ENCODE measurements at regions of chr17 and their contacts with region 1.

Region 1: DNA sequence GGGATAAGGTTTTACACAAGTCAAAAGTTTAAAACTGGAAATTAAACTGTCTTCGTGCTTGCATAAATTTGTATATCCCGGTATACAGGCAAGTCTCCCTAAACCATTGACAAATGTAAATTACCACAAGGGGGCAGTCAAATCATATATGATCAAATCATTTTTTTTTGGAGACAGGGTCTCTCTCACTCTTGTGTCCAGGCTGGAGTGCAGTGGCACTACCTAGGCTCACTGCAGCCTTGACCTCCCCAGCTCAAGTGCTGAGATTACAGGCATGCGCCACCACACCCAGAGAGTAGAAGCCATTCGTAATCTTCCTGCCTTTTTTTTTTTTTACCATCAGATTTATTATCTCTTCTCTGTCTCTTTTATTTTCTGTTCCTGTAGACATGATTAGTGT is 18.5 kb downstream of the TOP2A start:
- DNase-seq: no peak
- ATAC-seq: peak in 2 of 4 donors; percentile 44 to 70
- H3K4me3 ChIP-seq: no peak overlapping the region
- H3K27ac ChIP-seq: no peak overlapping the region
- H3K4me1 ChIP-seq: no peaks in the 10 kb centered on the region
- H3K27me3 ChIP-seq: no peaks in the 10 kb centered on the region
- CTCF ChIP-seq: peak; percentile 49 to 74 (median 58)
- POLR2A ChIP-seq: no peak

Region 2: GRCh38 chr17:40279407-40279806 is 119.8 kb before region 1 on chr17:
- intact Hi-C with region 1: no loop called
- DNase-seq: no peak
- ATAC-seq: no peak
- H3K4me3 ChIP-seq: no peak overlapping the region
- H3K27ac ChIP-seq: no peak overlapping the region
- H3K4me1 ChIP-seq: peaks cover 0 to 22% (median 5%) of the 10 kb centered on the region in 12 donors
- H3K27me3 ChIP-seq: no peaks in the 10 kb centered on the region
- CTCF ChIP-seq: no peak
- POLR2A ChIP-seq: no peak

Region 3: DNA sequence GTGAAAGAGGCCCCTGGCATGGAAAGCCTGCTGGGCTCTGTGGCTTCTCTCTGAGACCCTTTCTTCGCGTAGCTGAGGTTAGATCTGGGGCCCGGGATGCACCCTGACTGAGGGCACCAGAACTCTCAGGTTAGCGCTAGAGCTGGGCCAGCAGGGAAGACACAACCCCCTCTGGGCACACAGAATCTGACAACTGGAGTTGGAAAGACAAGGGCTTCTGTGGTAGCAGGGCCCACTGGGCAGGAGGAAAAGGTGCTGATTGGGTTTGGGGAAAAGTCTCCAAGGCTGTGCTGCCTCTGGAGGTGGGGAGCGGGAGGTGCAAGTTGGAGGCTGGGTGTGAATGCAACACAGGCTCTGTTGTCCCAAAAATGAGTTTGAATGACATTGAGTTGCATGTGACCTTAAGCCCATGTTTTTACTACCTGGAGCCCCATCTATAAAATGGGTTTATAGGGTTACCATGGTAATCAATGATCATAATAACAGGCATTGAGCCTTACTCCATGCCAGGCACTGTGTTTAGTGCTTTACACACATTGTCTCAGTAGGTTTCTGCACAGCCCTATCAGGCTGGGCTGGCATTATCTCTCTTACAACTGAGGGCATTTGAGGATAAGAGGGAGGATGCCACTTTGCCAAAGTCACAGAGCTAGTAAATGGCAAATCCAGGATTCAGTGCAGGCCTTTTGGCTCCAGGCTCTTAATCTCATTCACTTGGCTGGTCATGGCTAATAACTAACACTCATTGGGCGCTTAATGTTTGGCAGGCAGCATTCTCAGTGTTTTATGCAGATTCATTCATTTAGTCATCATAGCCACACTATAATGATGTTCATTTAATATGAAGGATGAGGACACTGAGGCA is 34.6 kb after region 1 on chr17:
- intact Hi-C with region 1: loop called in 1 of 10 experiments (anchors 2 kb)
- DNase-seq: no peak
- ATAC-seq: peak in 3 of 4 donors; percentile 38 to 40 (median 39)
- H3K4me3 ChIP-seq: no peak overlapping the region
- H3K27ac ChIP-seq: peak overlapping the region in 8 of 12 donors; percentile 4 to 84 (median 38)
- H3K4me1 ChIP-seq: peaks cover 0 to 29% (median 15%) of the 10 kb centered on the region in 12 donors
- H3K27me3 ChIP-seq: no peaks in the 10 kb centered on the region
- CTCF ChIP-seq: peak in 11 of 12 donors; percentile 24 to 60 (median 39)
- POLR2A ChIP-seq: no peak

Region 4: GRCh38 chr17:40443583-40444327 is 44.6 kb after region 1 on chr17:
- intact Hi-C with region 1: loop called in 1 of 10 experiments (anchors 5 kb)
- DNase-seq: peak; percentile 80 to 92 (median 83)
- ATAC-seq: peak in 3 of 4 donors; percentile 48 to 58 (median 50)
- H3K4me3 ChIP-seq: peak overlapping the region; percentile 46 to 92 (median 74)
- H3K27ac ChIP-seq: peak overlapping the region; percentile 86 to 98 (median 96)
- H3K4me1 ChIP-seq: peaks cover 0 to 57% (median 39%) of the 10 kb centered on the region in 12 donors
- H3K27me3 ChIP-seq: no peaks in the 10 kb centered on the region
- CTCF ChIP-seq: peak in 10 of 12 donors; percentile 12 to 56 (median 40)
- POLR2A ChIP-seq: no peak

Region 5: DNA sequence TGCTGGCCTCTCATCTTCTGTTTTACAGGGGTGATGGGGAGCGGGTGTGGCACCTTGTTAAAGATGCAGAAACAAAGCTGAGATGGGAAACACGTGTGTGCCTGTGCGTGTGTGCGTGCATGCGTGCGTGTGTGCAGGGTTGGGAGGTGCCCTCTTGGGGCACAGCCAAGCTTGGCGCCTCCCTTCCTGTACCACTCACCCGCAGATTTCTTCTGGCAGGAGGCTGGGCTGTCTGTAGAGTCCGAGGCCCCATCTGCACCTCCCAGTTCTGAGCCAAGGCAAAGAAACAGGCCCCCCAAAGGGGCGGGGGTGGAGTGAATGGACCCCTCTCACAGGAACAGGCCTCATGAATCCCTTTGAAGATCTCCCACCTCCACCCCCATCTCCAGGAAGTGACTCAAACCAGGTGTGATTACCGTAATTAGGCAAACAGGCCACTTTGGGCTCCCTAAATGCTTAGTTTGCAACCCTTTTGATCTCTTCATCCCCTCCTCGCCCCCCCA is 81.4 kb after region 1 on chr17:
- intact Hi-C with region 1: loop called in 4 of 10 experiments (anchors 2 to 5 kb)
- DNase-seq: peak in 1 of 5 donors; percentile 51
- ATAC-seq: peak in 3 of 4 donors; percentile 20 to 60 (median 30)
- H3K4me3 ChIP-seq: no peak overlapping the region
- H3K27ac ChIP-seq: peak overlapping the region in 1 of 12 donors; percentile 86
- H3K4me1 ChIP-seq: peaks cover 0 to 31% (median 5%) of the 10 kb centered on the region in 12 donors
- H3K27me3 ChIP-seq: no peaks in the 10 kb centered on the region
- CTCF ChIP-seq: no peak
- POLR2A ChIP-seq: no peak

Region 6: GRCh38 chr17:40510328-40510648 is 111.1 kb after region 1 on chr17:
- intact Hi-C with region 1: no loop called
- DNase-seq: peak in 1 of 5 donors; percentile 28
- ATAC-seq: peak in 3 of 4 donors; percentile 23 to 52 (median 28)
- H3K4me3 ChIP-seq: no peak overlapping the region
- H3K27ac ChIP-seq: no peak overlapping the region
- H3K4me1 ChIP-seq: peaks cover 0 to 10% (median 1%) of the 10 kb centered on the region in 12 donors
- H3K27me3 ChIP-seq: peaks cover 0 to 5% (median 0%) of the 10 kb centered on the region in 9 donors
- CTCF ChIP-seq: no peak
- POLR2A ChIP-seq: no peak

Region 7: GRCh38 chr17:40531051-40531991 is 132.1 kb after region 1 on chr17:
- intact Hi-C with region 1: loop called in 9 of 10 experiments (anchors 1 to 5 kb)
- DNase-seq: peak in 1 of 5 donors; percentile 19
- ATAC-seq: no peak
- H3K4me3 ChIP-seq: no peak overlapping the region
- H3K27ac ChIP-seq: peak overlapping the region in 6 of 12 donors; percentile 22 to 84 (median 75)
- H3K4me1 ChIP-seq: peaks cover 0 to 48% (median 26%) of the 10 kb centered on the region in 12 donors
- H3K27me3 ChIP-seq: no peaks in the 10 kb centered on the region
- CTCF ChIP-seq: no peak
- POLR2A ChIP-seq: no peak

Region 8: DNA sequence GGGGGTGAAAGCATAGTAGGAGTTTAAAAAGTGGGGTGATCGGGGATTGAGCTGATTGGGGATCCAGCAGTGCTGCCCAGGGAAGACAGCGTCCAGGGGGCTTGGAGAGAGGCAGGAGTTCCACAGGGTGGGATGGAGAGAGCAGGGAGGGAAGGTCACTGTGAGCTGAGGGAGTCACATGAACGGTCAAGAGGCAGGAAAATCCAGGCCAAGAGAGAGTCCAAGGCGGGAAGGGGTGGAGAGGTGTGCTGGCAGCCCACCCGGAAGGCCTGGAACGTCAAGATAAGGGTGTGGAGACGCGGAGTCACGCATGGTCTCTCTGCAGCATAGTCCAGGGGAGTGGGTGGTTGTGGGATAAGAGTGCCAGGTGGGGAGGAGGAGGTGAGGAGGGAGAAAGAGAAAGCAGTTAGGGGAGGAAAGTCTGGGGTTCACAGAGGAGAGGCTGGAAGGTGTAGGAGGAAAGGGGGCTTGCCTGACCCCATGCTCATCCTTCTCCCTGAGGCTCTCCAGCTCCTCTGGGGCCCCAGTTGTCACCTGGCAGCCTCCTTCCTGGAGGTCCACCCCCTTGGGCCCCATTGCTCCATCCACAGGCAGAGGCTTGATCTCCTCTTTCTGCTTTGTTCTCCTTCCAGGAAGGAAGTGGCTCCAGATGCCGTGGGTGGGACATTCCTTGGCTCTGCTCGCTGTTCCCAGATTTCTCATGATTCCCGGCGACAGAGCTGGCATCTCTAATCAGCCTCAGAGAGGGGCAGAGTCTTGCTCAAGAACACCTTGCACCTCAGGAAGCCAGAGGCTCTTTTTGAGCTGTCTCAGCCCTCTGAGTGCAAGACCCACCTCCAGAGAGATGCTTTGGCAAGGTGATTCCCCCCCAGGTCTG is 137.3 kb after region 1 on chr17:
- intact Hi-C with region 1: loop called in 9 of 10 experiments (anchors 1 to 5 kb)
- DNase-seq: peak in 4 of 5 donors; percentile 71 to 80 (median 76)
- ATAC-seq: peak; percentile 45 to 75 (median 64)
- H3K4me3 ChIP-seq: no peak overlapping the region
- H3K27ac ChIP-seq: peak overlapping the region; percentile 59 to 98 (median 88)
- H3K4me1 ChIP-seq: peaks cover 27 to 97% (median 71%) of the 10 kb centered on the region in 12 donors
- H3K27me3 ChIP-seq: no peaks in the 10 kb centered on the region
- CTCF ChIP-seq: no peak
- POLR2A ChIP-seq: no peak

Region 9: DNA sequence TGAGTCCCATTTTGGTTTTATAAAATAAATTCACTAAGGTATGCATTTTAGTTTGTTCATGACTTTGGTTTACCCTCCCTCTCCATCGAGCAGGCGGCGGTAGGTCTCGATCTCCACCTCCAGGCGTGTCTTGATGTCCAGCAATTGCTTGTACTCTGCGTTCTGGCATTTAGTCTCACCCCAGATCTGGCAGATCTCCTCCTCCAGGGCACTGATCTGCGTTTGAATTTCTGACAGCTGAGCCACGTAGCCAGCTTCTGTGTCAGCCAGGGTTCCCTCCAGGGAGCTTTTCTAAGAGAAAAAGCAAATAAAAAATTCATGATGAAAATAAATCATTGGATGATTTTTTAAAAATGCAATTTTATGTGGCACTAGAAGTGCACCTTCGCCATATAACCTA is 300.2 kb after region 1 on chr17:
- intact Hi-C with region 1: no loop called
- DNase-seq: no peak
- ATAC-seq: no peak
- H3K4me3 ChIP-seq: no peak overlapping the region
- H3K27ac ChIP-seq: no peak overlapping the region
- H3K4me1 ChIP-seq: no peaks in the 10 kb centered on the region
- H3K27me3 ChIP-seq: peaks cover 0 to 54% (median 9%) of the 10 kb centered on the region in 9 donors
- CTCF ChIP-seq: no peak
- POLR2A ChIP-seq: no peak

Measured in heart left ventricle (tissue), 16 donors.